Panc1 (cell line): ENCODE measurements at regions of chr5 and their contacts with region 1.

Region 1: DNA sequence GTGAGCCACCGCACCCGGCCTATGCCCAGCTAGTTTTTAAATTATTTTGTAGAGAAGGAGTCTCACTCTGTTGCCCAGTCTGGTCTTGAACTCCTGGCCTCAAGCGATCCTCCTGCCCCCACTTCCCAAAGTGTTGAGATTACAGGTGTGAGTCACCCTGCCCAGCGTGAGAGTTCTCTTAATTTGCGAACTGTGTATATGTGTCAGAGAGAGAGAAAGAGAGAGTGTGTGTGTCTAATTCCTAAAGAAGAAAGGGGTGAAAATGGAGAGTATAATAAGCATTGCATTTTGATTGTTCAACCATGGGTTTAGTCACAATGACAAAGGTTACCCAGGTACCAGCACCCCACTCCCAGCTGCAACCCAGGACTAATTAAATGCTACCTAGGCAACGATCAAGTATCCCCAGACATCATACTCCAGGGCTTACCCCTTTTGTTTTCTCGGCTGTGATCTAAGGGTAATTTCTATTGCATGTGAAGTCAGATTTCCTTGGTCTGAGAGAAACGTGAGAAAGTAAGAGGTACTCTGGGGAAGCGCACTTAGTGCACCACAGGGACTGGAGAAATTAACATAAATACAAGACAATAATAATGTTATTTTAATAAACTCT is 16.6 kb downstream of the MAP1B start:
- DNase-seq: no peak
- ATAC-seq: no peak
- H3K4me3 ChIP-seq: no peak overlapping the region
- H3K27ac ChIP-seq: no peak overlapping the region
- H3K4me1 ChIP-seq: no peaks in the 10 kb centered on the region
- H3K27me3 ChIP-seq: no peaks in the 10 kb centered on the region
- CTCF ChIP-seq: no peak

Region 2: GRCh38 chr5:71982717-71983395 is 141.0 kb before region 1 on chr5:
- CTCF ChIA-PET with region 1: no interaction called
- POLR2A ChIA-PET with region 1: interaction called, 17 read pairs
- in situ Hi-C with region 1: no loop called
- intact Hi-C with region 1: no loop called
- DNase-seq: no peak
- ATAC-seq: no peak
- H3K4me3 ChIP-seq: no peak overlapping the region
- H3K27ac ChIP-seq: no peak overlapping the region
- H3K4me1 ChIP-seq: no peaks in the 10 kb centered on the region
- H3K27me3 ChIP-seq: no peaks in the 10 kb centered on the region
- CTCF ChIP-seq: no peak

Region 3: GRCh38 chr5:72531496-72532190 is 407.8 kb after region 1 on chr5:
- CTCF ChIA-PET with region 1: no interaction called
- POLR2A ChIA-PET with region 1: no interaction called
- in situ Hi-C with region 1: no loop called
- intact Hi-C with region 1: no loop called
- DNase-seq: no peak
- ATAC-seq: no peak
- H3K4me3 ChIP-seq: no peak overlapping the region
- H3K27ac ChIP-seq: no peak overlapping the region
- H3K4me1 ChIP-seq: no peaks in the 10 kb centered on the region
- H3K27me3 ChIP-seq: no peaks in the 10 kb centered on the region
- CTCF ChIP-seq: no peak